GM13976 (cell line): ENCODE measurements at regions of chr13 and their contacts with region 1.

Region 1: GRCh38 chr13:51797664-51798488 is 6.1 kb downstream of the DHRS12 start:
- DNase-seq: peak; percentile 65
- CTCF ChIP-seq: peak; percentile 45

Region 2: GRCh38 chr13:50991579-50992521 is 806.0 kb before region 1 on chr13:
- in situ Hi-C with region 1: no loop called
- DNase-seq: peak; percentile 45
- CTCF ChIP-seq: no peak

Region 3: GRCh38 chr13:51286135-51287002 is 511.5 kb before region 1 on chr13:
- in situ Hi-C with region 1: loop called (anchors 25 kb)
- DNase-seq: peak; percentile 76
- CTCF ChIP-seq: peak; percentile 93

Region 4: DNA sequence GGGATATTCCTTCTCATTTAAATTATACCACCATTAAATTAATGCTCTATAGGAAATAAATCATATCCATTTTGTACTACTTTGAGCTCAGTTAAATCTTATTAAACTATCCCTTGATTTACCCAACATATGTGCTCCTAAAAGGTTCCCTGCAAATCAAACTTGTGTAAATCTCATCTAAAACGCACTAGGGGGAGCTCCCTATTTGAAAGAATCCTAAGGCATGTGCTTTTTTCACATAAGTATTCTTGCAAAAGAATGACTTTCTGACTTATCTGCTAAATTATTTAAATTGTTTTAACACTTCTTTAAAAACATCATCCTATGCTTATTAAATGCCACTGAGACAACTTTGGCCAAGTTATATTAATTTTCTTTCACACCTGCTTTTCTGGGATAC is 353.0 kb before region 1 on chr13:
- in situ Hi-C with region 1: loop called (anchors 10 kb)
- DNase-seq: no peak
- CTCF ChIP-seq: no peak